ENCODE measurements at regions of chr2 and their contacts with region 1.

Region 1: DNA sequence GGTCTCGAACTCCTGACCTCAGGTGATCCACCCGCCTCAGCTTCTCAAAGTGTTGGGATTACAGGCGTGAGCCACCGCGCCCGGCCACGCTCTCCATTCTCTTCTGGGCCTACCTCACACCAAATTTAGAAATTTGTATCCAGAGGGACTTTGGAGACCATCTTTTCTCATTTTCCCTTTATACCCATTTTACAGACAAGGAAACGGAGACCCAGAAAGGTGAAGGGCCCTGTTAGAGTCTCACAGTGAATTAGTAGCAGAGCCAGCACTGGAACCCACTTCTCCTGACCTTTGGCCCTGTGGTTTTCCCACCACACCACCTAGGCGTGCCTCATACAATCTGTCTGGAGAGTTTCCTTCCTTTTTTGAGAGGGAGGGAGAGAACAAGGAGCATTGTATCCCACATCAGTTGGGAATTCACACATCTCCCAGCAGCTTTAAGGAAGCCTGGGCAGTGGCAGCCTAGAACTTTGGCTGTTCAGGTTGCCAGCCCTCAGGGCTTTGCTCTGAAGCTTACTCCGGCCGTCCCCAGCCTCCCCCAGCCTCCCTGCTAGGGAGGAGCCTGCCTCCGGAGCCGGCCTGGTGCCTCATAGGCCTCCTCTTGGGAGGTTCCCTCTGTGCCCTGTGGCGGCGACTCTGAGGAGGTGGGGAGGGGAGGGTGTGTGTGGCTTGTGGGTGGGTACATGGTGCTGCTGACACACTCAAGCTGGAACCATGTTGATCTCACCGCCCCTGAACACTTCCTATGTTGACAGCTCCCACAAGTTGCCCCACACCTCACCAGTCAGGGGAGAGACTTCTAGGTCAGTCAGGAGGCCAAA is 13.8 kb downstream of the FOSL2 start:
- DNase-seq: peak in 2 of 3 donors; percentile 65 to 66
- ATAC-seq: peak; percentile 23 to 45 (median 39)
- H3K4me3 ChIP-seq: no peak overlapping the region
- H3K27ac ChIP-seq: peak overlapping the region; percentile 21 to 55 (median 30)
- H3K4me1 ChIP-seq: peaks cover 0 to 31% (median 12%) of the 10 kb centered on the region in 4 donors
- H3K27me3 ChIP-seq: no peaks in the 10 kb centered on the region
- CTCF ChIP-seq: no peak
- POLR2A ChIP-seq: no peak

Region 2: GRCh38 chr2:27723372-27724144 is 682.9 kb before region 1 on chr2:
- intact Hi-C with region 1: loop called in 1 of 2 experiments (anchors 10 kb)
- DNase-seq: peak; percentile 67 to 77 (median 74)
- ATAC-seq: peak; percentile 82 to 97 (median 94)
- H3K4me3 ChIP-seq: no peak overlapping the region
- H3K27ac ChIP-seq: no peak overlapping the region
- H3K4me1 ChIP-seq: peaks cover 0 to 4% (median 0%) of the 10 kb centered on the region in 4 donors
- H3K27me3 ChIP-seq: no peaks in the 10 kb centered on the region
- CTCF ChIP-seq: peak; percentile 78 to 86 (median 84)
- POLR2A ChIP-seq: no peak

Region 3: DNA sequence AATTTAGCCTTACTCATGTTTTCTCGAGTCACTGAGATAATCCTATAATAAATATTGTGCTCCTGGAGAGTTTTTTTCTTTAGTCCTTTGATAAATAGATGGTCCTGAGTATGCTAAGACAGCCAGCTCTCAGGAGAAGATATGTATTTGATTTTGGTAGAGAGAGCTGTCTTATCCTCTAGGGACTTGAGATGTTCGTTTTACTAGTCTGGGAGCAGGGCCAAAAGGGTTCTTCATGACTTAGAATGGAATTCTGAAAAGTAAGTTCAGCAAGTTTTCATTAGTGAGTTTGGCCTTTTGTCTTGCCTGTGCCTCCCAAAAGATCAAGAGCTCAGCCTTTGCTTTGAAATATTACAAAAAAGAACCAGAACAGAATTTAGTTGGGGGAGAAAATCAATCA is 269.3 kb before region 1 on chr2:
- intact Hi-C with region 1: loop called in 1 of 2 experiments (anchors 5 kb)
- DNase-seq: no peak
- ATAC-seq: no peak
- H3K4me3 ChIP-seq: no peak overlapping the region
- H3K27ac ChIP-seq: no peak overlapping the region
- H3K4me1 ChIP-seq: peaks cover 0 to 22% (median 3%) of the 10 kb centered on the region in 4 donors
- H3K27me3 ChIP-seq: no peaks in the 10 kb centered on the region
- CTCF ChIP-seq: no peak
- POLR2A ChIP-seq: no peak